AG04450 (cell line): ENCODE measurements at regions of chr20 and their contacts with region 1.

Region 1: DNA sequence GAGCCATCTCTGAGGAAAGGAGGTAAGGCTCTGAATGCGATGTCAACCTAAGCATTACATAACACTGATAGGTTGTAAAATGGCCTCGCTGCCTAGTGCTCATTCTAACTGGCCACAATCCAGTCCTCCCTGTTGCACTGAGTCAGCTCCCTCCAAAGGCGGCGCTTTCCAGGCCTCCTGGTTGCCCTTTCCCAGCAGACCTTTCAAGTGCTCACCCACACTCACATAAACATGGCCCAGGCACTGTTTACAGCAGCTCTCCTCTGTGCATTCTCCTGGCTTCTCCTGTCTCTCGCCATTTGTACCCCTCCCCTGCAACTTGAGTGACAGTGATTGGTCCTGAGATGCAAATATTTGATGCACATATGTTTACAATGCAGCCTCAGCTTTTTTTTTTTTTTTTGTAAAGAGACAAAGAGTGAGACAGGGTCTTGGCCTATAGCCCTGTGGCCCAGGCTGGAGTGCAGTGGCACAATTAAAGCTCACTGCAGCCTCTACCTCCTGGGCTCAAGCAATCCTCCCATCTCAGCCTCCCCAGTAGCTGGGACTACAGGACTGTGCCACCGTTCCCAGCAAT is 36.8 kb upstream of the PRND start:
- DNase-seq: peak; percentile 60
- H3K4me3 ChIP-seq: no peak overlapping the region; the same call in 1 of the 2 replicates
- H3K27ac ChIP-seq: peak overlapping the region; percentile 66
- H3K27me3 ChIP-seq: no peaks in the 10 kb centered on the region
- CTCF ChIP-seq: peak; percentile 15; the same call in 1 of the 2 replicates

Region 2: DNA sequence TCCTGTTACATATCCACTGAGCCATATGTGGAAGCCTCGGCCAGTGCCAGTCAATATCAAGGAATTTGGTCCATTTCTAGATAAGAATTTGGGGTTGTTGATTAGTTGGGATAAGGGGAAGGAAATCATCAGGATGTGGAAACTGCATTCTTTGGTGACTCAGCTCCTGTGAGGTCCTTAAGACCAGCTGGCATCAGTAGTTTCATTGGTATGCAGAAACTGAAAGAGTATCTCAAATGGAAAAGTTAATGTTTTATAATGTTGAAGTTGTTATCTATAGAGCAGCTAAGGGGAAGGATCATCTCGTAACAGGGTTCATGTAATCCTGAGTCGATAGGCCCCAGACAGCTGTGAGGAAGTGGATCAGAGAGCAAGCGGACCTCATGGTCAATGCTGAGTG is 51.1 kb before region 1 on chr20:
- CTCF ChIA-PET with region 1: no interaction called
- POLR2A ChIA-PET with region 1: interaction called, 10 read pairs
- DNase-seq: peak; percentile 81
- H3K4me3 ChIP-seq: no peak overlapping the region
- H3K27ac ChIP-seq: peak overlapping the region; percentile 80
- H3K27me3 ChIP-seq: no peaks in the 10 kb centered on the region
- CTCF ChIP-seq: no peak